HepG2 (cell line): ENCODE measurements at regions of chr17 and their contacts with region 1.

Region 1: GRCh38 chr17:79839363-79840268 is at the start of gene CBX4:
- DNase-seq: peak; percentile 92
- ATAC-seq: peak; percentile 44
- H3K4me3 ChIP-seq: peak within 1 kb of the TSS; percentile 77 to 100 (median 87)
- H3K27ac ChIP-seq: peak within 1 kb of the TSS; percentile 71
- H3K4me1 ChIP-seq: peaks cover 68% of the 10 kb centered on the region
- H3K27me3 ChIP-seq: no peaks in the 10 kb centered on the region; a peak in 1 of 5 replicates
- CTCF ChIP-seq: peak; percentile 89
- EP300 ChIP-seq: peak in 1 of 2 experiments; percentile 51; a peak in 1 of 4 replicates
- POLR2A ChIP-seq: peak in 1 of 2 experiments; percentile 63; a peak in 2 of 4 replicates
- RAD21 ChIP-seq: peak; percentile 95
- total RNA-seq, gene CBX4: 17.1 and 25.8 TPM in 2 replicates

Region 2: DNA sequence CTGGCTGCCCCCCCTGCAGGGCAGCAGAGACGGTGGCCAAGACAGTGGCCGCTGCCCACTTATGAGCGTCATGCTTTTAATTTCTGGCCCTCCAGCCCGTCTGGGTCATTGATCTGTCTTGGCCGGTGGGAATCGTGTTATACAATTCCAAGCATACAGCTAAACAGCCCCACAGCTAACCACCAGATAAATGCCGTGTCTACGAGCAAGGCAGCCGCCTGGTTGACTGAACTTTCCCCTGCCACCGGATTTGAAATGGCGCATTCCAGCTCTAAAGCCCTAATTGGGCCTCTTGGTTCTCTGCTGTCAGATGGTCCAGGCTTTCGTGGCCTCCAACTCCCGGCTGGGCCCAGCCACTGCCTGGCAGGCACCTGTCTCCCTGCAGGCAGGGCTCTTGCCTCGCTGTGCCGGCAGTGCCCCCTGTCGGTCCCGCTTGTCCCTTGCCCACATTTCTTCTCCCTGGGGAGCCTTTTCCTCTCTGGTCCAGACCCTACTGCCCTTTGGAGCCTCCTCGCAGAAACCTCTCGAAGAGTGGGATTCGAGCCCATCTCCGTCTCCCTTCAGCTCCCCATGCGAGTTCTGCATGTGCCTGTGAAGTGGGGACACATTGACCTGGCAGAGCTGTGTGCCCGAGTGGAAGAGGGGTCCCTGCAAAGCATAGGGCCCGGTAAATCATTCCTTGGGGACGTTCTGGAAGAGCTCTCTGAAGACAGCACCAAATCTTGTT is 227.0 kb before region 1 on chr17:
- CTCF ChIA-PET with region 1: no interaction called
- POLR2A ChIA-PET with region 1: no interaction called
- in situ Hi-C with region 1: no loop called
- intact Hi-C with region 1: no loop called
- DNase-seq: peak; percentile 46
- ATAC-seq: peak; percentile 78
- H3K4me3 ChIP-seq: no peak overlapping the region
- H3K27ac ChIP-seq: no peak overlapping the region
- H3K4me1 ChIP-seq: no peaks in the 10 kb centered on the region
- H3K27me3 ChIP-seq: peaks cover 30 to 76% of the 10 kb centered on the region in 2 experiments
- CTCF ChIP-seq: peak; percentile 82
- EP300 ChIP-seq: no peak
- POLR2A ChIP-seq: no peak
- RAD21 ChIP-seq: peak; percentile 54; the same call in 1 of the 2 replicates

Region 3: DNA sequence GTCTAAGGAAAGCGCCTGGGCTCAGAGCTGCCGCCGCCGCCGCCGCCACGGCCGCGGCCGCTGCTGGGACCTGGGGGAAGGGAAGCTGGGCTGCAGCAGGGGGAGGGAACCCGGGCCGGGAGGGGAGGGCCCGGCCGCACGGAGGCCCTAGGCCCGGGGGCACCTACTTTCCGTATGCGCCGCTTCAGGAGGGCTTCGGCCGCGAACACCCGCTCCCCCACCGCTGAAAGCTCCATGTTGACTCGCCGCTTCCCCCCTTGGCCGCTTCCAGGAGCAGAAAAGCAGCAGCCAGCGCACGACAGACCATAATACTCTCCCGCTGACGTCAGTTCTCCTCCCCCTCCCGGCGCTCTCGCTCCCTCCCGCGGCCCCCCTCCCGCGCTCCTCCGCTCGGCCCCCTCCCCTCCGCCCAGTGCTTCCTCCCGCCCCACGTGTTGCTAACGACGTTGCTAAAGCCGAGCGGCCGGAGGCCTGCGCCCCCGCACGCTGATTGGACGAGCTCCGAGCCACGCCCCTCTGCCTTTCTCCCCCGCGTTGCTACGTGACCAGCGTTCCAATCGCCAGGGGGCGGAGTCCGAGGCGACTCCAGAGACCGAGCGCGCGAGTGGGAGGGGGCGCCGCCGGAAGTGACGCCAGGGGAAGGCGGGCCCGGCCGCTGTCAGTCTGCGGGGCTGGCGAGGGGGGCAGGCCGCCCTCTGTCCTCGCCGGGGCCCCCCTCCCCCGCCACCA is 42.7 kb before region 1 on chr17 and contains the start of gene CBX8:
- CTCF ChIA-PET with region 1: interaction called, 3 read pairs
- POLR2A ChIA-PET with region 1: interaction called, 40 read pairs
- in situ Hi-C with region 1: no loop called
- intact Hi-C with region 1: loop called (anchors 5 kb)
- DNase-seq: peak; percentile 99
- ATAC-seq: peak; percentile 69
- H3K4me3 ChIP-seq: peak within 1 kb of the TSS; percentile 85 to 94 (median 86)
- H3K27ac ChIP-seq: peak within 1 kb of the TSS; percentile 87
- H3K4me1 ChIP-seq: peaks cover 67% of the 10 kb centered on the region
- H3K27me3 ChIP-seq: peaks cover 28 to 49% of the 10 kb centered on the region in 2 experiments
- CTCF ChIP-seq: peak; percentile 72
- EP300 ChIP-seq: peak in 1 of 2 experiments; percentile 32; a peak in 2 of 4 replicates
- POLR2A ChIP-seq: peak; percentile 78 to 92
- RAD21 ChIP-seq: peak; percentile 74
- total RNA-seq, gene CBX8: 12.0 and 12.6 TPM in 2 replicates

Region 4: DNA sequence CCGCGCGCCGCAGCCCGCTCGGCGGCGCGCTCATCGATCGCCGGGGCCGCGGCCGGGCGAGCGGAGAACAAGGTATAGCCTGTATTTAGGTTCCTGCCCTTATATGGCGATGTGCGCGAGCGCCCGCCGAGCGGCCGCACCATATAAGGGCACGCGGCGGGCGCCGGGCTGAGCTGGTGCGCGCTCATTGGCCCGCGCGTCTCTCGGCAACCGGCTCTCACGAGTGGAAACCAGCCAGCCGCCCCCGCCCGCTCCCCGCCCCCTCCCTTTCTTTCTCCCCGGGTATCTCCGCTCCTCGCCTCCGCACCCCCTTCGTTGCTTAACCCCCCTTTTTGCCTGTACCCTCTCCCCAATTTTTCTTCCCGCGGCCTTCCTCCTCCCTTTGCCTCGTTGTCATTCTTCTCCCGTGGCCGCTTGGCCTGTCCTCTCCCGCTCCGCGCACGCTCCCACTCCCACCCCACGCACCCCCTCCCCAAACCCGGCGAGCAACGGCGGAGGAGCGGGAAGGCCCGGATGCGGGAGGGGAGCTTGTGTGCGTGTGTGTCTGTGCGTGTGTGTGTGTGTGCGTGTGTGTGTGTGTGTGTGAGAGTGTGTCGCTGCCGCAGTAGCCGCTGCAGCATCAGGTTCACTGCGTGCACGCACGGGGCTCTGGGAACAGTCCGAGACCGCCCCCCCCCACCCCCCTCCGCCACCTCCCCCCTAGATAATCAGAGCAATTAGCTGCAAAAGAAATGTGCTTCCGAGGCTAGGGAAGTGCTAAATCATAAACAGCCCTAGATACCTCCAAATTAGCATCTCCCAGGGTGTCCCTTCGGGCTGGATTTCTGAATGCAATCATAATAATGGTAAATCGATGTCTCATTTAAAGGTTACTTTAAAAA is 29.2 kb before region 1 on chr17:
- CTCF ChIA-PET with region 1: interaction called, 12 read pairs
- POLR2A ChIA-PET with region 1: interaction called, 274 read pairs
- in situ Hi-C with region 1: no loop called
- intact Hi-C with region 1: no loop called
- DNase-seq: peak; percentile 83
- ATAC-seq: peak; percentile 77
- H3K4me3 ChIP-seq: peak overlapping the region in 2 of 3 experiments; percentile 38 to 62; a peak in 3 of 6 replicates
- H3K27ac ChIP-seq: no peak overlapping the region
- H3K4me1 ChIP-seq: peaks cover 49% of the 10 kb centered on the region
- H3K27me3 ChIP-seq: peaks cover 25 to 68% of the 10 kb centered on the region in 2 experiments
- CTCF ChIP-seq: no peak
- EP300 ChIP-seq: no peak
- POLR2A ChIP-seq: no peak
- RAD21 ChIP-seq: peak; percentile 27; the same call in 1 of the 2 replicates

Region 5: GRCh38 chr17:79826204-79826680 is 13.4 kb before region 1 on chr17:
- CTCF ChIA-PET with region 1: no interaction called
- POLR2A ChIA-PET with region 1: interaction called, 274 read pairs
- in situ Hi-C with region 1: no loop called
- intact Hi-C with region 1: no loop called
- DNase-seq: no peak
- ATAC-seq: no peak
- H3K4me3 ChIP-seq: no peak overlapping the region
- H3K27ac ChIP-seq: no peak overlapping the region
- H3K4me1 ChIP-seq: peaks cover 97% of the 10 kb centered on the region
- H3K27me3 ChIP-seq: peaks cover 0 to 2% of the 10 kb centered on the region in 2 experiments; a peak in 2 of 5 replicates
- CTCF ChIP-seq: no peak
- EP300 ChIP-seq: no peak
- POLR2A ChIP-seq: no peak
- RAD21 ChIP-seq: no peak

Region 6: GRCh38 chr17:79915850-79916430 is 76.3 kb after region 1 on chr17:
- CTCF ChIA-PET with region 1: no interaction called
- POLR2A ChIA-PET with region 1: interaction called, 3 read pairs
- in situ Hi-C with region 1: no loop called
- intact Hi-C with region 1: loop called (anchors 10 kb)
- DNase-seq: peak; percentile 75
- ATAC-seq: peak; percentile 31
- H3K4me3 ChIP-seq: peak overlapping the region in 1 of 3 experiments; percentile 9; a peak in 1 of 6 replicates
- H3K27ac ChIP-seq: no peak overlapping the region
- H3K4me1 ChIP-seq: peaks cover 82% of the 10 kb centered on the region
- H3K27me3 ChIP-seq: peaks cover 3 to 85% of the 10 kb centered on the region in 2 experiments; a peak in 4 of 5 replicates
- CTCF ChIP-seq: peak; percentile 77
- EP300 ChIP-seq: no peak
- POLR2A ChIP-seq: no peak
- RAD21 ChIP-seq: peak; percentile 74

Region 7: GRCh38 chr17:79930877-79931816 is 91.5 kb after region 1 on chr17:
- CTCF ChIA-PET with region 1: no interaction called
- POLR2A ChIA-PET with region 1: interaction called, 25 read pairs
- in situ Hi-C with region 1: loop called (anchors 5 kb)
- intact Hi-C with region 1: no loop called
- DNase-seq: no peak
- ATAC-seq: peak; percentile 0; the same call in 2 of the 3 replicates
- H3K4me3 ChIP-seq: peak overlapping the region; percentile 4 to 48 (median 45); a peak in 5 of 6 replicates
- H3K27ac ChIP-seq: peak overlapping the region; percentile 24
- H3K4me1 ChIP-seq: peaks cover 93% of the 10 kb centered on the region
- H3K27me3 ChIP-seq: no peaks in the 10 kb centered on the region
- CTCF ChIP-seq: no peak
- EP300 ChIP-seq: no peak
- POLR2A ChIP-seq: no peak
- RAD21 ChIP-seq: no peak